Left cardiac atrium (tissue), 4 donors: ENCODE measurements at regions of chr1 and their contacts with region 1.

Region 1: GRCh38 chr1:212566522-212567479 is 41.8 kb upstream of the ATF3 start:
- DNase-seq: peak; percentile 33
- ATAC-seq: peak; percentile 66 to 95

Region 2: DNA sequence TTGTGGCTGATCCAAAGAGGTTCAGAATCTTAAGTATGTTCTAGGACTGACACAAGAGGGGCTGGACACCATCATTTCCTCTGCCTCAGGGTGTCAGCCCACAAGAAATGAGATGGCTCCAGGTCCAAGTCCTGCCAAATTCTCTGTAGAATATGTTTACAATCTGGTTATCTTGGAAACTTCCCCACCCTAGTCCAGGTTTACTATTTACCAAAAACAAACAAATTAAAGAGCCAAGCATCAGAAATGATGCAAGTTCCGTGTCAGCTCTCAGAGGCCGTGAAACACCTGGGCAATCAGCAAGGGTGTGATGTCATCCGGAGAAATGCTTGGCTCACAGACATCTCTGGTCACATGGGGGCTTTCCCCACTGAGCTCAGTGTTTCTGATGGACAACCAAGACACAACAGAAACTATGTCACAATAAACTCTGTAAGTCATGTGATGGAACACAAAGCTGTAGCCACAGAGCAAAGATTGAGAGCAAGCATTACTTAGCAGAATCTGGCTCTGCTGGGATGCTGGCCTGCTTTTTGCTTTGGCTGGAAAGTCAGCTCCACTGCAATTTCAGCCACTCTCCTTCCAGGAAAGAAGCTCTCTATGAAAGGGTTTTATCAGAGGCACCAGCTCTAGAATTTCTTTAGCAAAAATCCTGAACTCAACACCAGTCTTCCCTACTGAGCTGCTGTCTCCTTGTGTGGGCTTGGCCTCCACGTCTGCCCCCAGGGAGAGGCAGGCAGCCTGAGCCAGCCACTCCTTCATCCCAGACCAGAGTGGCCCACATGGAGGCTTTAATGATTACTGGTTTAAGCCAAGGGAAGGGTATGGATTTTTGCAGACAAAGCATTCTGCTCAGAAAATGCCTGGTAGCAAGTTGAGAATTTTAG is 78.2 kb before region 1 on chr1:
- intact Hi-C with region 1: loop called in 1 of 2 experiments (anchors 5 kb)
- DNase-seq: peak; percentile 52
- ATAC-seq: peak; percentile 62 to 82

Region 3: DNA sequence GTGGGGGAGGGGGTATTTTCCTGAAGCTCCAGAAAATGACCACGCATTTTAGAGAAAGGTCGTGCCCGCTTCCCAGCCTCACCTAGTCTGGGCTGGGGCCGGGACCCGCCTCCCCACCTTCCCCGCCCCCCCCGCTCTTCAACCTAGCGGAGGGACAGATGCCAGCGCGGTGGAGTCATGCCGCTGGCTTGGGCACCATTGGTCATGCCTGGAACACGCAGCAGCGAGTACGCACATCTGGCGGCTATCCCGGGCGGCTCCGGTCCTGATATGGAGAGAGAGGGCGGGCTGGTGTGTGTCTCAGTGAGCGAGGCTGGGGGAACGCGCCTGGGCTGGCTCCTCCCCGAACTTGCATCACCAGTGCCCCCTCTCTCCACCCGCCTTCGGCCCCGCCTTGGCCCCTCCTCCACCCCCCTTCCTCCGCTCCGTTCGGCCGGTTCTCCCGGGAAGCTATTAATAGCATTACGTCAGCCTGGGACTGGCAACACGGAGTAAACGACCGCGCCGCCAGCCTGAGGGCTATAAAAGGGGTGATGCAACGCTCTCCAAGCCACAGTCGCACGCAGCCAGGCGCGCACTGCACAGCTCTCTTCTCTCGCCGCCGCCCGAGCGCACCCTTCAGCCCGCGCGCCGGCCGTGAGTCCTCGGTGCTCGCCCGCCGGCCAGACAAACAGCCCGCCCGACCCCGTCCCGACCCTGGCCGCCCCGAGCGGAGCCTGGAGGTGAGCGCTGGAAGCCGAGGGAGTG is 41.6 kb after region 1 on chr1 and contains the start of gene ATF3:
- intact Hi-C with region 1: loop called in 1 of 2 experiments (anchors 2 kb)
- DNase-seq: peak; percentile 100
- ATAC-seq: peak; percentile 94 to 95
- total RNA-seq, gene ATF3: 19.2 to 30.7 TPM